ENCODE measurements at regions of chr3 and their contacts with region 1.

Region 1: GRCh38 chr3:112519424-112520001 is 20.2 kb upstream of the BTLA start:
- DNase-seq: peak; percentile 68
- H3K4me3 ChIP-seq: no peak overlapping the region
- H3K27ac ChIP-seq: no peak overlapping the region
- H3K4me1 ChIP-seq: no peaks in the 10 kb centered on the region
- H3K27me3 ChIP-seq: no peaks in the 10 kb centered on the region
- CTCF ChIP-seq: peak; percentile 75

Region 2: GRCh38 chr3:112111785-112112402 is 407.6 kb before region 1 on chr3:
- CTCF ChIA-PET with region 1: interaction called, 3 read pairs
- POLR2A ChIA-PET with region 1: no interaction called
- intact Hi-C with region 1: loop called (anchors 2 kb)
- DNase-seq: peak; percentile 82
- H3K4me3 ChIP-seq: no peak overlapping the region
- H3K27ac ChIP-seq: no peak overlapping the region
- H3K4me1 ChIP-seq: no peaks in the 10 kb centered on the region
- H3K27me3 ChIP-seq: no peaks in the 10 kb centered on the region
- CTCF ChIP-seq: peak; percentile 89

Region 3: GRCh38 chr3:112136959-112137693 is 382.4 kb before region 1 on chr3:
- CTCF ChIA-PET with region 1: no interaction called
- POLR2A ChIA-PET with region 1: no interaction called
- intact Hi-C with region 1: loop called (anchors 2 kb)
- DNase-seq: peak; percentile 71
- H3K4me3 ChIP-seq: no peak overlapping the region
- H3K27ac ChIP-seq: no peak overlapping the region
- H3K4me1 ChIP-seq: no peaks in the 10 kb centered on the region
- H3K27me3 ChIP-seq: no peaks in the 10 kb centered on the region
- CTCF ChIP-seq: peak; percentile 77

Region 4: GRCh38 chr3:112293368-112294321 is 225.9 kb before region 1 on chr3 and contains the start of gene SLC9C1:
- CTCF ChIA-PET with region 1: no interaction called
- POLR2A ChIA-PET with region 1: no interaction called
- intact Hi-C with region 1: loop called (anchors 1 kb)
- DNase-seq: peak; percentile 77
- H3K4me3 ChIP-seq: peak within 1 kb of the TSS; percentile 12
- H3K27ac ChIP-seq: no peak within 1 kb of the TSS
- H3K4me1 ChIP-seq: peaks cover 4% of the 10 kb centered on the region
- H3K27me3 ChIP-seq: no peaks in the 10 kb centered on the region
- CTCF ChIP-seq: peak; percentile 76
- total RNA-seq, gene SLC9C1: not detected in 2 replicates

Region 5: GRCh38 chr3:112327371-112327951 is 192.1 kb before region 1 on chr3:
- CTCF ChIA-PET with region 1: no interaction called
- POLR2A ChIA-PET with region 1: no interaction called
- intact Hi-C with region 1: loop called (anchors 2 kb)
- DNase-seq: peak; percentile 68
- H3K4me3 ChIP-seq: no peak overlapping the region
- H3K27ac ChIP-seq: no peak overlapping the region
- H3K4me1 ChIP-seq: no peaks in the 10 kb centered on the region
- H3K27me3 ChIP-seq: peaks cover 14% of the 10 kb centered on the region
- CTCF ChIP-seq: peak; percentile 68

Measured in A673 (cell line).